ENCODE measurements at regions of chr2 and their contacts with region 1.

Region 1: GRCh38 chr2:28392297-28393113 is at the start of gene FOSL2:
- DNase-seq: peak; percentile 65 to 96 (median 90)
- H3K4me3 ChIP-seq: peak within 1 kb of the TSS; percentile 55 to 96 (median 81)
- H3K27ac ChIP-seq: peak within 1 kb of the TSS; percentile 82 to 99 (median 96)
- H3K27me3 ChIP-seq: no peaks in the 10 kb centered on the region
- CTCF ChIP-seq: peak in 20 of 56 donors; percentile 2 to 25 (median 10)
- total RNA-seq, gene FOSL2: 22.5 to 173 (median 64.0) TPM

Region 2: GRCh38 chr2:27703638-27704341 is 688.7 kb before region 1 on chr2:
- intact Hi-C with region 1: loop called (anchors 5 kb)
- DNase-seq: peak; percentile 62 to 90 (median 84)
- H3K4me3 ChIP-seq: no peak overlapping the region
- H3K27ac ChIP-seq: peak overlapping the region in 2 of 59 donors; percentile 38 to 47
- H3K27me3 ChIP-seq: no peaks in the 10 kb centered on the region
- CTCF ChIP-seq: peak; percentile 79 to 97 (median 93)

Region 3: DNA sequence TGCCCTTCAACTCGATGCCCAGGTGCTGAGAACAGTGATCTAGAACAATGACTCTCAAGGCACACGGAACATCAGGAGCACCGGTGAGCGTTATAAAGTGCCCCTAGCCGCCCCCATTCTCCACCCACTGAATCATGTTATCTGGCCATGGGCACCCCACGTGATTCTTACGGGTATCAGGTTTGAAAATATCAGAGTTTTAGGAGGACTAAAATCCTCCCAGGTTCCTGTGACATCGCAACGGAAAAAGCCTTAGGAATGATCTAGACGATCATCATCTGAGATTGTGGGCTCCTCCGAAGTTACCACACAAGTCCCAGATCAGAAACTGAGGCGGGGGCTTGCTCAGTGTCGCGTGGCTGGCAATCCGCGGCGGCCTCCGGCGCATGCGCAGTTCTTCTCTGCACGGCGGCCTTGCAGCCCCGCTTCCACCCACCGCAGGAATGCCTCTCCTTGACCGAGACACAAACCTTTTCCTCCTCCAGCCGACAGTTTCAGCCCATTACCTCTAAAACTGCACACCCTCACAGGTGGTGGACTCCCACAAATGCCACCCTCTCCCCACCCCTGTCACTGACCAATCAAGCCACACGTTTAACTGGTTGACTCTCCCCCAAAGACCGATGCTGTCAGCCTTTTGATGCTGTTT is 626.8 kb before region 1 on chr2:
- intact Hi-C with region 1: loop called (anchors 5 to 10 kb)
- DNase-seq: peak in 4 of 10 donors; percentile 28 to 48 (median 38)
- H3K4me3 ChIP-seq: peak overlapping the region in 52 of 59 donors; percentile 5 to 58 (median 38)
- H3K27ac ChIP-seq: peak overlapping the region in 3 of 59 donors; percentile 13 to 43 (median 14)
- H3K27me3 ChIP-seq: peaks cover 0 to 19% (median 0%) of the 10 kb centered on the region in 45 donors
- CTCF ChIP-seq: no peak

Region 4: DNA sequence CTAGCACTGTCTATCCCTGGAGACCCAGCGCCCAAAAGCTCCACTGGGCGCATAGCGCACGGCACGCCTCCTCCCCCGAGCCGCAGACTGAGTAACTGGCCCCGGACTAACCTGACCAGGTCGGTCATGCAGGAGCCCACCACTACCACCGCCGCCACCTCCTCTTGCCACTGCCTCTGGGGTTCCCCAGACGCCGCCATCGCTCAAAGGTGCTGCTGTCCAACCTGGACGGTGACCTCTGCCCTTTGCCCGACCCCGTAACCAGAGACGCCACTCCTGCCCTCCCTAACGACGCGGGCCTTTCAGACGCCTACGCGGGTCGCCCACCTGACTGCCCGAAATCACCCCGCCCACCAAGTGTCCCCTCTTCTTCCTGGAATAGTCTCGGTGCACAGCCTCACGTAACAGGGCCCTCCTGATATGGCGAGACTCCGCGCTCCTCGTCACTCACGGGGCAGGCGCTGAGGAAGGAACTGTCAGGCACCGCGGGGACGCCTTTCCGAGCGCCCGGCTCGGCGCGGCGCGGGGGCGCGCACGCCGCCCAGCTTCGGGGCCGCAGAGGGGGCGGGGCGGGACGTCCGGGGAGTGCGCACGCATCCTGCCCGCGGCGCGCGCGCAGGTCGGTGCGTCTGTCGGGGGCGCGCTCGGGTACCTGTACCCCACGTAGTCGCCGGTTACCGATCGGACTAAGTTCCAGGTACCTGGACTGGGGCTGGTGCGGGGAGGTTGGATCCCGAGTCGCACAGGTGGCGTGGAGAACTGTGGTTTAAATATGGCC is 502.2 kb before region 1 on chr2 and contains the starts of genes BABAM2 and RBKS:
- intact Hi-C with region 1: loop called (anchors 5 kb)
- DNase-seq: peak; percentile 58 to 89 (median 80)
- H3K4me3 ChIP-seq: peak within 1 kb of the TSS; percentile 57 to 96 (median 85)
- H3K27ac ChIP-seq: peak within 1 kb of the TSS; percentile 24 to 99 (median 94)
- H3K27me3 ChIP-seq: no peaks in the 10 kb centered on the region
- CTCF ChIP-seq: peak in 14 of 56 donors; percentile 3 to 32 (median 10)
- total RNA-seq, gene BABAM2: 31.9 to 79.7 (median 53.8) TPM
- total RNA-seq, gene RBKS: 2.1 to 10.6 (median 4.0) TPM

Region 5: DNA sequence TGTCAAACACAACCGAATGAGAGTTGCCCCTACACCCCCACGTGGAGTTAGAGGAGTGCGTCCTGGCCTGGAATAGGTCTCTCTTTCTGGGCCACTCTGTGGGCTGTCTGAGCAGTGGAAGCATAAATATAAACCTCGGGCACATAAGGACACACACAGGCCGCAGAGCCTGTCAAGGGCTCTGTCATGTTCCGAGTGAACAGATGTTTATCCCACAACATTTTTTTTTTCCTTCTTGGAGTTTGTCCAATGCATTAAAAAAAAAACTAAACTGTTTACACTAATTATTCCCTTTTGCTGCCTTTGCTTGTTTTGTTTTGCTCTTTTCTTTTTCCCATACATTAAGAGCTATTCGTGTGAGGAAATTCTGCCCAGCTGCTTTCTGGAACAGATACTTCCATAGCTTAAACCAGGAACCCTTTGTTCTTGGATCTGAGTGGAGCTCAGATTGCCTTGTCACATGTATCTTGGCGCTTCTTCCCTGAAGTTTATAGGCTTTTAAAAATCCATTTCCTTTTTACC is 228.2 kb before region 1 on chr2:
- intact Hi-C with region 1: loop called in 1 of 2 experiments (anchors 10 kb)
- DNase-seq: no peak
- H3K4me3 ChIP-seq: peak overlapping the region in 1 of 59 donors; percentile 4
- H3K27ac ChIP-seq: peak overlapping the region in 35 of 59 donors; percentile 5 to 70 (median 41)
- H3K27me3 ChIP-seq: no peaks in the 10 kb centered on the region
- CTCF ChIP-seq: no peak

Region 6: DNA sequence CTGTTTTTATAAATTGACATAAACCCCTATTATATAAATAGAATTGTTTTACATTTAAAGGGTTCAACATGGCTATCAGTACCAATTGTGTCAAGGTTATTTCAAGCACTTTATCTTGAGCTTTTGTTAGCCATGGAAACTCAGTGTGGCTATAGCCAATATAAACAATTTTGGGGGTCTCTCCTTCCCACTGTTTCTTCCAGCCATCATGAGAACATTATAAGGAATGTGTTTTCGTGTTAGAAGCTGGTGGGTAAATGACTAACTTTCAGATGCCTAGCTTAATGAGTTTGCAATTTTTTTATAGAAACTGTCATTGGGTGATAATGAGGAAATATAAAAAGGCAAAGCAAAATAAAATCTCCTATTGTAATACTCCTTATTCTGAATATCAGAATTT is 153.3 kb before region 1 on chr2:
- intact Hi-C with region 1: loop called in 1 of 2 experiments (anchors 5 kb)
- DNase-seq: no peak
- H3K4me3 ChIP-seq: no peak overlapping the region
- H3K27ac ChIP-seq: peak overlapping the region in 39 of 59 donors; percentile 19 to 88 (median 77)
- H3K27me3 ChIP-seq: no peaks in the 10 kb centered on the region
- CTCF ChIP-seq: no peak